ENCODE measurements at regions of chr10 and their contacts with region 1.

Region 1: DNA sequence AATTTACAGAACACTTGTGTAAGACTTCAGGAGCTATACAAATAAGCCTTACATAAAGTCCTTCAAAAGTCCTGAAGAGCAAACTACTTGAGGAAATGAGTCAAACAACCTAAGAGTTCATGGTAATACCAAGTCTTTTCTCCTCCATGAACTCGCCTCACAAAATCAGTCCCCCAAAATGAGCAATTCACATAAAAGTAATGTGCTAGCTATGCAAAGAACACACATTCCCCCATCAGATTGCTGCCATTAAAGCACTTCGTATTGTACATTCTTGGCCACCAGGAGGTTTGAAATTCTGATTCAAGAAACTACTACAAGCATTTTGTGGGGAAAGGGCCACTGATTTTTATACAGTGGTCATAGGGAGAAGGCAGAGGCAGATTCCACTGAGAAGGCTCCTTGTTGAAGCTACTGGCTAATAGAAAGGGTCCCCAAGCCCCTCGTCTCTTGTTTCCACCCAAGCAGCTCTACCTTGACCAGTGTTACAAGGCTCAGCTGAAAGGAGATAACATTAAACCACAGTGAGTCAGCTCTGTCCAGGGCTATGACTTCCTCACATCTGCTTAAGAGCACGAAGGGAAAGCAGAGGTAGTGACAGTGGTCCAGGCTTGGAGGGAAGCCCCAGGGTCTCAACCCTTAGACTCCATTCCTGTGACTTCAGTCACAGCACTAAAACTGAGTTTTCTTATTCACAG is 115.2 kb upstream of the CDK1 start:
- DNase-seq: no peak
- H3K4me3 Mint-ChIP-seq: no peak overlapping the region
- H3K27ac Mint-ChIP-seq: no peak overlapping the region
- H3K4me1 Mint-ChIP-seq: peaks cover 45% of the 10 kb centered on the region
- H3K27me3 Mint-ChIP-seq: peaks cover 3% of the 10 kb centered on the region

Region 2: DNA sequence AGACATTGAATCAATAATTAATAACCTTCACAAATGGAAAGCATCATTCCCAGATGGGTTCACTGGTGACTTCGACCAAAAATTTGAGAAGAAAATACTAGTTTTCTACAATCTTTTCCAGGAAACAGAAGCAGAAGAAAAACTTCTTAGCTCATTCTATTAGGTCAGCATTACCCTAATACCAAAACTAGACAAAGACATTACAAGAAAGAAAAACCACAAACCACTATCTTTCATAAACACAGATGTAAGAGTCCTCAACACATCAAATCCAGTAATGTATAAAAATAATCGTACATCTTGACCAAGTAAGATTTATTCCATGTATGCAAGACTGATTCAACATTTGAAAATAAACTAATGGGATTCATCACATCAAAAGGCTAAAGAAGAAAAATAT is 51.2 kb after region 1 on chr10:
- CTCF ChIA-PET with region 1: interaction called, 3 read pairs
- POLR2A ChIA-PET with region 1: no interaction called
- intact Hi-C with region 1: loop called (anchors 2 kb)
- DNase-seq: no peak
- H3K4me3 Mint-ChIP-seq: peak overlapping the region; percentile 4
- H3K27ac Mint-ChIP-seq: peak overlapping the region; percentile 7
- H3K4me1 Mint-ChIP-seq: peaks cover 47% of the 10 kb centered on the region
- H3K27me3 Mint-ChIP-seq: no peaks in the 10 kb centered on the region

Measured in activated CD4-positive, alpha-beta memory T cell treated with anti-CD3 and anti-CD28 coated beads for 36 hours (primary cell).